ENCODE measurements at regions of chr10 and their contacts with region 1.

Region 1: DNA sequence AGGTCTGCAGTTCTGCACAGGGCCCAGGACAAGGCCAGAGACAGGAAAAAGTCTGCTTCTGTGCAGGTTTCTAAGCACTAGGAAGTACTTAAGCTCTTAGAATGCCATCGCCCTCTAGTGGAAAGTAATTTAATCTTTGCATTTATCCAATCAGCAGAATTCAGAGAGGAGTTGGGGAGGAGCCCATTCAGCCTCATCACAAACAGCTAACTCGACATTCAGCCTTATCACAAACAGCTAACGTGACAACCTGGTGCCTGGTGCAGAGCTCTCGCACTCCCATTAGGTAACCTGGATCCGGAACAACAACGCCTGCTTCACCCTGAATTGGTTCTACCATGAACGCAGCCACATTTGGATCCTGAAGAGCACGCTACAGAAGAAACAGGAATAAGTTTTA is 15.2 kb downstream of the OAT start:
- DNase-seq: peak; percentile 20
- H3K4me3 ChIP-seq: no peak overlapping the region
- H3K27ac ChIP-seq: no peak overlapping the region
- H3K4me1 ChIP-seq: no peaks in the 10 kb centered on the region
- H3K27me3 ChIP-seq: no peaks in the 10 kb centered on the region
- CTCF ChIP-seq: peak in 3 of 4 experiments; percentile 38 to 48 (median 43)
- POLR2A ChIP-seq: no peak

Region 2: DNA sequence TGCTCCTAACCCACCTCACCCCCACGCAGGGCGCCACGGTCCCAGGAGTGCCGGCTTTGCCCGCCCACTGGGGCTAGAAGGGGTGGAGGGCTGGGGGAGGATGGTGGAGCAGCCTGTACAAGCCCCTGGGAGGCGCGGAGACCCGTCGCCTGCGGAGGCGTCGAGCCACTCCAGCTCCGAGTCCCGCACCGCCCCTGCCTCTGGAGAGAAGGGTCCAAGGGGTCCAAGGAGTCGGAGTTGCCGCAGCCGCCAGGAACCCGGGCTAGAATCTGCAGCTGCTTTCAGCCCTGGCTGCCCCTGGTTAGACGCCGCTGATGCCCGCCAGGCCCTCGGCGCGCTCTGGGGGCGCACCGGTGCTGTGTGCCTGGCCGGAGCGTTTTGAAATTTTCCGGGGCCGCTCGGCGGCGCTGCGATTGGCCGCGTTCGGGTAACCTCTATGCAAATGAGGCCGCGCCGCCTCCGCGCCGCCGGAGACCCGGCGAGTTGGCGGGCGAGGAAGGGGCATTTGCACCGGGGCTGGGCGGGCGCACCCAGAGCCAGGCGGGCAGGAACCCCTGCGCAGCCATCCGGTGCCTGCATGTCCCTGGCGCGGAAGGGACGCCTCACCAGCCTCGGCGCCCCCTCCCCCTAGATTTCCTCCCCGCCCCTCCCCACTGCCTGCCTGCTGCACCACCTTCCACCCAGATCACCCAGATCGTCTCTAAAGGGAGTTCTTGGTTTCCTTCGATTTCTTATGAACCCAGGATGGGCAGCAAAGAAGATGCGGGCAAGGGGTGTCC is 1255.7 kb before region 1 on chr10 and contains the start of gene HMX2:
- intact Hi-C with region 1: loop called (anchors 10 kb)
- DNase-seq: no peak
- H3K4me3 ChIP-seq: no peak within 1 kb of the TSS
- H3K27ac ChIP-seq: no peak within 1 kb of the TSS
- H3K4me1 ChIP-seq: peaks cover 6% of the 10 kb centered on the region
- H3K27me3 ChIP-seq: peaks cover 79% of the 10 kb centered on the region
- CTCF ChIP-seq: no peak
- POLR2A ChIP-seq: no peak
- total RNA-seq, gene HMX2: 1.0 TPM in 1 of 2 donors, not detected in the other

Region 3: GRCh38 chr10:124306922-124307371 is 96.6 kb before region 1 on chr10:
- intact Hi-C with region 1: no loop called
- DNase-seq: no peak
- H3K4me3 ChIP-seq: no peak overlapping the region
- H3K27ac ChIP-seq: no peak overlapping the region
- H3K4me1 ChIP-seq: no peaks in the 10 kb centered on the region
- H3K27me3 ChIP-seq: no peaks in the 10 kb centered on the region
- CTCF ChIP-seq: no peak
- POLR2A ChIP-seq: no peak

Region 4: DNA sequence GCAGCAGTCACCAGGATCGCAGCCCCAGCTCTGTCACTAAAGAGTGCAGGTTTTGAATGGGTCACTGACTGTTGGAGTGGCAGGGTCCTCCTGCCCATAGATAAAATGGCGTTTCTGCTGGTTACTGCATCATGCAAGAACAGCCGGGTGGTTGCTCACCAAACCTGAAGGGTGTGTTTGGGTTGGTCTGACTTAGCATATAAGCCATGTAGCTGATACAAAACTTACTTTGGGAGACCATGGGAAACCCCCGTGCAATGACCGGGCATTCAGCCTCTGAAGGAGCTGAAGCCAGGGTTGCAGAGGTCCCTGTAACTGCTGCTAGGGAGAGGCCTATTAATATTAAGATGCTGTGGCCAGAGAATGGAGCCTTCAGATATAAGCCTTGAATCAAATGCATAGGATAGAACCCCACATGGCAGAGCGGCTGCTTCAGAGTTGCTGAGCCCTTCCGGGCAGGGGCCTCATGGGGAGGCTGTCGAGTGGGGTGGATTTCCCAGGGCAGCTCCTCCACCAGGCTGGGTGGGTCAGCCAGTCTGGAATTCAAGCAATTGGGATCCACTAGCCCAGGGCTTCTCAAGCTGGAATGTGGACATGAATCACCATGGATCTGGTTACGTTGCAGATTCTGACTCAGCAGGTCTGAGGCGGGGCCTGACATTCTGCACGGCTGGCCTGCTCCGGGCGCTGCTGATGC is 827.7 kb after region 1 on chr10:
- intact Hi-C with region 1: no loop called
- DNase-seq: no peak
- H3K4me3 ChIP-seq: no peak overlapping the region
- H3K27ac ChIP-seq: no peak overlapping the region
- H3K4me1 ChIP-seq: no peaks in the 10 kb centered on the region
- H3K27me3 ChIP-seq: no peaks in the 10 kb centered on the region
- CTCF ChIP-seq: no peak
- POLR2A ChIP-seq: no peak

Measured in prostate gland (tissue), 2 donors.